CD8-positive, alpha-beta T cell (primary cell): ENCODE measurements at regions of chrX and their contacts with region 1.

Region 1: GRCh38 chrX:1657367-1658070 is 42.7 kb downstream of the ASMT start:
- DNase-seq: peak; percentile 10 to 94 (median 63)
- ATAC-seq: peak; percentile 31
- H3K4me3 ChIP-seq: peak overlapping the region; percentile 46 to 69
- H3K4me3 Mint-ChIP-seq: peak overlapping the region; percentile 98
- H3K27ac ChIP-seq: peak overlapping the region; percentile 78 to 98
- H3K27ac Mint-ChIP-seq: peak overlapping the region; percentile 98
- H3K4me1 ChIP-seq: peaks cover 18% of the 10 kb centered on the region
- H3K4me1 Mint-ChIP-seq: peaks cover 39% of the 10 kb centered on the region
- H3K27me3 ChIP-seq: no peaks in the 10 kb centered on the region
- H3K27me3 Mint-ChIP-seq: no peaks in the 10 kb centered on the region
- CTCF ChIP-seq: no peak

Region 2: DNA sequence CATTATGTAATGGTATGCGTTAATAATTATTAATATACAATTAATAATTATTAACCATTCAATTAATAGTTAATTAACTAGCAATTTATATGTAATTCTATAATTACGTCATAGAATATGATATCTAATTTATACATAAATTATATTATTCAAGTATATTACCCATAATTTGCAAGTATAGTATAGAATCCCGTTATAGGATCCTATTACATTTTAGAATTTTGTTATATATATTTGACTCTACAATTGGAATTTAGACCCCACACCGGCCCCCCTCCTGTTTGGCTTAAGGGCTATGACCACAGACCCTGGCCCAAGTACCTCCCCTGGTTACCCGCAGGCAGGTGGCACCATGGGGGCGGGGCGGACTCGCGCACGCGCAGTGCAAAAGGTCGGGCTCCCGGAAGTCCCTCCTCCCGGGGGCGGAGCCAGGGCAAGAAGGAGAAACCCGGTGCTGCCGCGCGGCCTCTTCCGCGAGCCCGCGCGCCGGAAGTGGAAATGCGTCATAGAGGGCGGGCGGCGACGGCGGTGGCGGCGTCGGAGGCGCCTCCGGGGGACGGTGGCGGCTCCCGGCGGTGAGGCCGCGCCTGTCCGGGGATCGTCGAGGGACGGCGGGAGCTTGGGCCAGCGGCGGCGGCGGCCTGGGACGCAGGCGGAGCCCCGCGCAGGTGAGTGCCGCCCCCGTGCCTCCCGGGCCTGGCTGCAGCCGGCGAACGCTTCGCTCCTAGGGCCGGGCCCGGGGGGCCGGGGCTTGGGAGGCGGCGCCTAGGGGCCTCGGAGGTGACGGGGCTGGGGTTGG is 66.2 kb before region 1 on chrX and contains the start of gene AKAP17A:
- CTCF ChIA-PET with region 1: no interaction called
- POLR2A ChIA-PET with region 1: no interaction called
- intact Hi-C with region 1: loop called (anchors 1 to 2 kb)
- DNase-seq: peak; percentile 95 to 100 (median 98)
- ATAC-seq: peak; percentile 88
- H3K4me3 ChIP-seq: peak within 1 kb of the TSS; percentile 82 to 85
- H3K4me3 Mint-ChIP-seq: peak within 1 kb of the TSS; percentile 90
- H3K27ac ChIP-seq: peak within 1 kb of the TSS; percentile 71 to 79
- H3K27ac Mint-ChIP-seq: peak within 1 kb of the TSS; percentile 91
- H3K4me1 ChIP-seq: peaks cover 35% of the 10 kb centered on the region
- H3K4me1 Mint-ChIP-seq: peaks cover 39% of the 10 kb centered on the region
- H3K27me3 ChIP-seq: no peaks in the 10 kb centered on the region
- H3K27me3 Mint-ChIP-seq: no peaks in the 10 kb centered on the region
- CTCF ChIP-seq: no peak
- total RNA-seq, gene AKAP17A: 193 to 209 TPM

Region 3: GRCh38 chrX:2500267-2501075 is 843.0 kb after region 1 on chrX and contains the starts of genes DHRSX and ZBED1:
- CTCF ChIA-PET with region 1: no interaction called
- POLR2A ChIA-PET with region 1: no interaction called
- intact Hi-C with region 1: loop called (anchors 5 kb)
- DNase-seq: peak in 8 of 9 experiments; percentile 29 to 72 (median 48)
- ATAC-seq: peak; percentile 64
- H3K4me3 ChIP-seq: peak within 1 kb of the TSS; percentile 66 to 67
- H3K4me3 Mint-ChIP-seq: peak within 1 kb of the TSS; percentile 88
- H3K27ac ChIP-seq: peak within 1 kb of the TSS; percentile 68 to 76
- H3K27ac Mint-ChIP-seq: peak within 1 kb of the TSS; percentile 93
- H3K4me1 ChIP-seq: peaks cover 12% of the 10 kb centered on the region
- H3K4me1 Mint-ChIP-seq: peaks cover 35% of the 10 kb centered on the region
- H3K27me3 ChIP-seq: no peaks in the 10 kb centered on the region
- H3K27me3 Mint-ChIP-seq: no peaks in the 10 kb centered on the region
- CTCF ChIP-seq: no peak
- total RNA-seq, gene DHRSX: 9.9 to 10.8 TPM
- total RNA-seq, gene ZBED1: 13.4 to 14.8 TPM

Region 4: DNA sequence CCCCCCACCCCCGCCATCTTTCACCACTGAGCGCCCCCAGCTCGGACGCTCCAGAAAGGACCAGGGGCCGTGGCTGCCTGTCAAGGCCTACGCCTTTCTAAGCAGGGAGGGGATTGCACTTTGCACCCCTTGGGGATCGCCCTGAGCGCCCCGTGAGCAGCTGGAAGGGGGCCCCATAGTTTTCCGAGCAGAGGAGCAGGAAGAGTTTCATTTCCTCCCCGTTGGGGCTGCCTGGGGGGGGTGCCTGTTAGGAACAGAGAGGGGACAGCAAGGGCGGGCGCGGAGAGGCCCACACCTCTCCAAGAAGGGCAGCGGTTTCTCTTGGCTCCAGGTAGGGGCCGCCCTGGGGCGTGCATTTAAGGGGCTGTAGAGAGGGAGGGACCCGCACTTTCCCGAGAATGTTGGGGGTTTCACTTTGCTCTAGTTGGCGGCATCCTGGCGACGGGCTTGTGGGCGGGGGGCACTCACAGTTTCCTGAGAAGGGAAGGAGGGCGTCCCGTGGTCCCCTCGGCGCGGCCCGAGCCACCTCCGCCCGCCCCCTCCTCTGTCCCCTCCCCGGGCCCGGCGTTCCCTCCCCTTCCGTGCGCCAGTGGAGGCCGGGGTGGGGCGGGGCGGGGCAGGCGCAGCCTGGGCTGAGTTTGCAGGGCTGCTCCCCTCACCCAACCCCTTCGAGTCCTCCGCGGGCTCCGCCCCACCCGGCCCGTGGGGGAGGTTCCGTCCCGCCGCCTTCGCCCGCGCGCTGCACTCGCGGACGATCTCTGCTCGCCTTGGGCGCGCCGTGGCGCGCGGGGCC is 951.3 kb after region 1 on chrX:
- CTCF ChIA-PET with region 1: no interaction called
- POLR2A ChIA-PET with region 1: no interaction called
- intact Hi-C with region 1: loop called (anchors 1 to 5 kb)
- DNase-seq: peak; percentile 66 to 92 (median 85)
- ATAC-seq: peak; percentile 95
- H3K4me3 ChIP-seq: peak overlapping the region; percentile 88 to 93
- H3K4me3 Mint-ChIP-seq: peak overlapping the region; percentile 93
- H3K27ac ChIP-seq: peak overlapping the region; percentile 54 to 59
- H3K27ac Mint-ChIP-seq: peak overlapping the region; percentile 83
- H3K4me1 ChIP-seq: peaks cover 18% of the 10 kb centered on the region
- H3K4me1 Mint-ChIP-seq: peaks cover 46% of the 10 kb centered on the region
- H3K27me3 ChIP-seq: no peaks in the 10 kb centered on the region
- H3K27me3 Mint-ChIP-seq: no peaks in the 10 kb centered on the region
- CTCF ChIP-seq: no peak

Region 5: GRCh38 chrX:2627272-2627867 is 969.9 kb after region 1 on chrX:
- CTCF ChIA-PET with region 1: no interaction called
- POLR2A ChIA-PET with region 1: no interaction called
- intact Hi-C with region 1: loop called (anchors 1 to 5 kb)
- DNase-seq: peak in 6 of 9 experiments; percentile 39 to 69 (median 50)
- ATAC-seq: peak; percentile 33
- H3K4me3 ChIP-seq: no peak overlapping the region
- H3K4me3 Mint-ChIP-seq: no peak overlapping the region
- H3K27ac ChIP-seq: no peak overlapping the region
- H3K27ac Mint-ChIP-seq: peak overlapping the region; percentile 58
- H3K4me1 ChIP-seq: peaks cover 16% of the 10 kb centered on the region
- H3K4me1 Mint-ChIP-seq: peaks cover 48% of the 10 kb centered on the region
- H3K27me3 ChIP-seq: no peaks in the 10 kb centered on the region
- H3K27me3 Mint-ChIP-seq: no peaks in the 10 kb centered on the region
- CTCF ChIP-seq: peak; percentile 43

Region 6: DNA sequence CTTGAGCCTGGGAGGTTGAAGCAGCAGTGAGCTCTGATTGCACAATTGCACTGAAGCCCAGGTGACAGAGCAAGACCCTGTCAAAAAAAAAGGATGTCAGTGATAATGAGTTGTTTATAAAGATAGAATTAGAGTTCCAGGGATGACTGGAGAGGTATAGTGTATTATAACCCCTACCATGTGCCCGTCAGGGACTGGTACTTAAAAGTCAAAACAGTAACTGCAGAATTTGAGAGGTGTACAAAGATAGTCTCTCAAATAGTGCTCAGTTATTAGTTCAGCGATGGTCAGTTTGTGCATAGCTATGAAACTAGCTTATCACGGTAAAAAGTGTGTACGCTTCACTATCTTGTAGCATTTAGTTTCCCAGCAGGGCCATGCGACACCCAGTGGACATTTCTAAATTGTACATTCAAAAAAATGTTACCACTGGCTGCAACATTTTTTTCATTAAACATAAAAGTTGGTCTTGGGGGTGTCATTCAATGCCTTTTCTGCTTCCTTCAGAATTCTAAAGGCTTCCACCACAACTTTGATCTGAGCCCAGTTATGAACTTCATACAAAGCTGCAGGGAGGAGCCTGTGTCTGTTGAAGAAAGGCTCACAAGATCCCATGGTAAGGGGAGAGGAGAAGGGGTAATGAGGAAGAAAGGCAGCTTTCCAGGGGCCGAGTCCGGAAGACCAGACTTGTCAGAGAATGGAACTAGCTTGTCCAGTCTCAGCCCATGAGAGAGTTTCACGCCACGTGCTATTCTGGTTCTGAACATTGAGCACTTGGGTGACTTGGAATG is 1162.0 kb after region 1 on chrX:
- CTCF ChIA-PET with region 1: no interaction called
- POLR2A ChIA-PET with region 1: no interaction called
- intact Hi-C with region 1: loop called in 1 of 2 experiments (anchors 10 kb)
- DNase-seq: peak in 1 of 9 experiments; percentile 9
- ATAC-seq: no peak
- H3K4me3 ChIP-seq: no peak overlapping the region
- H3K4me3 Mint-ChIP-seq: no peak overlapping the region
- H3K27ac ChIP-seq: no peak overlapping the region
- H3K27ac Mint-ChIP-seq: no peak overlapping the region
- H3K4me1 ChIP-seq: no peaks in the 10 kb centered on the region
- H3K4me1 Mint-ChIP-seq: peaks cover 2% of the 10 kb centered on the region
- H3K27me3 ChIP-seq: no peaks in the 10 kb centered on the region
- H3K27me3 Mint-ChIP-seq: peaks cover 1% of the 10 kb centered on the region
- CTCF ChIP-seq: no peak